Activated CD8-positive, alpha-beta T cell treated with anti-CD3 and anti-CD28 coated beads for 36 hours (primary cell): ENCODE measurements at regions of chr12 and their contacts with region 1.

Region 1: DNA sequence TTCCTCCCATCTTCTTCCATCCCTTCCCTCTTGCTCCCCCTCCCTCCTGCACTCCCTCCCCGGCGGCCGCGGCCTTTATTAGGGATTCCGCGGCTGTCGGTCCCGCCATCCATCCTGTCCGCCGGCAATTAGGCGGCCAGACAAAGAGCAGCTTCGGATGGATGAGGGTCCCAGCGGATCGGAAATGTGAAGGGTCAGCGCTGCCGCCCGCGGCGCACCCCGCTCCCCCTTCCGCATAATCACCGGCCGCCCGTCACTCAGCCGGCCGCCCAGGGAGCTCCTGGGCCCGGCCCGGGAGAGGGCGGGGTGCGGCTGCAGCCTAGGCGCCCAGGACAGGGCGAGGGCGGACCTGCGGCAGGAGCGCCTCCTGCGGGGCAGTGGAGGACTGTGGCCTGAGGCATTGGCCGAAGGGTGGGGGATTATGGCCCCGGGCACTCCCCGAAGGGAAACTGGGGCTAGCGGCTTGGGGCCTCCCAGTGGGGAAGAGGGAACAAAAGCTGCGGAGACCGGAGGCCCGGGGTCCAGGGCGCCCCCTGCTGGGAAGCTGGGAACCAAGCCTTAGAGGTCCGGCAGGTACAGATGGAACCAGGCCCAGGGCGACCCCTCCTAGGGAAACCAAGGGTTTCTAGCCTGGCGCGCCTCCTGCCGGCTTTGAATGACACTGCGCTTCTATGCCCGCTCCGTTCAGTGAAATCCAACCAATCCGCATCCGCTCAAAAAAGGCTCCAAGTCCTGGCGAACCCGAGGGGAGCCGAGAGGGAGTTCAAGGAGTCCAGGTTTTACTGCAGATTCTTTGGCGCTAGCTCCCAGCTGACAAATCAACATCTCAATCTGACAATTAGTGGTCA is 4.4 kb upstream of the DNAJC22 start:
- DNase-seq: peak; percentile 93
- ATAC-seq: peak; percentile 84
- H3K4me3 Mint-ChIP-seq: peak overlapping the region; percentile 53
- H3K27ac Mint-ChIP-seq: no peak overlapping the region
- H3K4me1 Mint-ChIP-seq: peaks cover 40% of the 10 kb centered on the region
- H3K27me3 Mint-ChIP-seq: peaks cover 69% of the 10 kb centered on the region
- CTCF ChIP-seq: peak; percentile 99

Region 2: DNA sequence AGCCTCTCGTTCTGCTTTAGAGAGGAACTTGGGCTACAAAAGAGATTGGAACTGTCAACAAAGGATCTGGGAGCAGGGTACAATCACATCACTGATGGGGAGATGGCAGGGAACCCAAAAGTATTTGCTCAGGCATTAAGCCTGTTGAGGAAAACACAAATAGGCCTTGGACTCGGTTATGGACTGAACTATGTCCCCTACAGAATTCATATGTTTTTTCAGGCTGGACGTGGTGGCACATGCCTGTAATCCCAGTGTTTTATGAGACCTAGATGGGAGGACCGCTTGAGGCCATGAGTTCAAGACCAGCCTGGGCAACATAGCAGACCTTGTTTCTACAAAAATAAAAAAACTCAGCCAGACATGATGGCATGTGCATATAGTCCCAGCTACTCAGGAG is 504.2 kb before region 1 on chr12:
- CTCF ChIA-PET with region 1: no interaction called
- POLR2A ChIA-PET with region 1: no interaction called
- intact Hi-C with region 1: no loop called
- DNase-seq: no peak
- ATAC-seq: no peak
- H3K4me3 Mint-ChIP-seq: no peak overlapping the region
- H3K27ac Mint-ChIP-seq: no peak overlapping the region
- H3K4me1 Mint-ChIP-seq: no peaks in the 10 kb centered on the region
- H3K27me3 Mint-ChIP-seq: no peaks in the 10 kb centered on the region
- CTCF ChIP-seq: no peak

Region 3: GRCh38 chr12:49304161-49304560 is 38.1 kb before region 1 on chr12:
- CTCF ChIA-PET with region 1: interaction called, 20 read pairs
- POLR2A ChIA-PET with region 1: interaction called, 3 read pairs
- intact Hi-C with region 1: no loop called
- DNase-seq: no peak
- ATAC-seq: no peak
- H3K4me3 Mint-ChIP-seq: no peak overlapping the region
- H3K27ac Mint-ChIP-seq: no peak overlapping the region
- H3K4me1 Mint-ChIP-seq: no peaks in the 10 kb centered on the region
- H3K27me3 Mint-ChIP-seq: peaks cover 34% of the 10 kb centered on the region
- CTCF ChIP-seq: no peak

Region 4: DNA sequence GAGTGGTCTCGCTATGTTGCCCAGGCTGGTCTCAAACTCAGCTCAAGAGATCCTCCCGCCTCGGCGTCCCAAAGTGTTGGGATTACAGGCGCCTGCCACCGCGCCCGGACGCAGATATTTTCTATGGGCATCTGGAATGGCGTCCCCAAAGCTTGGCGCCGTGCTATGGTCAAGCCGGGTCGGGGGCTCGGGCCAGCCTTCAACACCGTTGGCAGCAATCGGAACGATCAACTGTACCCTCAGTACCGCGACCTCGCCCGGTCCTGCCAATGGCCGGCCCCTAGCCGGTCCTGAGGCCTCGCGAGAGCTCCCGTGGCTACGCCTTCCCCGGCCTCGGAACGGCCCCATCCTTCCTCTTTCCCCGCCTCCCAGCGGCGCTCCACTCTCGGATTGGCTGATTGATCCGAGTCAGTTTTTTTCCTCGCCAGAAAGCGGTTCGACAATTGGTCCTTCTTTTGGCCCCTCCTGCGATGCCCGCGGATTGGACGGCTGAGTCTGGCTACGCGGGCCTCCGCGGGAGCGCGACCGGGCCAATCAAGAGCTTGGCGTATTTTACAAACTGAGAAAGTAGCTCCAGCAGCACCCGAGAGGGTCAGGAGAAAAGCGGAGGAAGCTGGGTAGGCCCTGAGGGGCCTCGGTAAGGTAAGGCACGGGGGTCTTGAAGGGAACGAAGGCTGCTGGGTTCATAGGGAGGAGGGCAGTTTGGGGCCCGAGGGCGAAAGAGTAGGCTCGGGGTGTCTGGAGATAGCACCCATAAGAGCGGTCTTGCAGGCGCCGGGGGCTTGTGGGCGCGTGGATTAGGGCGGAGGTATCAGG is 19.4 kb before region 1 on chr12 and contains the start of gene TROAP:
- CTCF ChIA-PET with region 1: interaction called, 42 read pairs
- POLR2A ChIA-PET with region 1: interaction called, 12 read pairs
- intact Hi-C with region 1: no loop called
- DNase-seq: peak; percentile 98
- ATAC-seq: peak; percentile 96
- H3K4me3 Mint-ChIP-seq: peak within 1 kb of the TSS; percentile 100
- H3K27ac Mint-ChIP-seq: peak within 1 kb of the TSS; percentile 92
- H3K4me1 Mint-ChIP-seq: peaks cover 10% of the 10 kb centered on the region
- H3K27me3 Mint-ChIP-seq: no peaks in the 10 kb centered on the region
- CTCF ChIP-seq: no peak
- total RNA-seq, gene TROAP: 46.6 to 52.6 TPM

Region 5: DNA sequence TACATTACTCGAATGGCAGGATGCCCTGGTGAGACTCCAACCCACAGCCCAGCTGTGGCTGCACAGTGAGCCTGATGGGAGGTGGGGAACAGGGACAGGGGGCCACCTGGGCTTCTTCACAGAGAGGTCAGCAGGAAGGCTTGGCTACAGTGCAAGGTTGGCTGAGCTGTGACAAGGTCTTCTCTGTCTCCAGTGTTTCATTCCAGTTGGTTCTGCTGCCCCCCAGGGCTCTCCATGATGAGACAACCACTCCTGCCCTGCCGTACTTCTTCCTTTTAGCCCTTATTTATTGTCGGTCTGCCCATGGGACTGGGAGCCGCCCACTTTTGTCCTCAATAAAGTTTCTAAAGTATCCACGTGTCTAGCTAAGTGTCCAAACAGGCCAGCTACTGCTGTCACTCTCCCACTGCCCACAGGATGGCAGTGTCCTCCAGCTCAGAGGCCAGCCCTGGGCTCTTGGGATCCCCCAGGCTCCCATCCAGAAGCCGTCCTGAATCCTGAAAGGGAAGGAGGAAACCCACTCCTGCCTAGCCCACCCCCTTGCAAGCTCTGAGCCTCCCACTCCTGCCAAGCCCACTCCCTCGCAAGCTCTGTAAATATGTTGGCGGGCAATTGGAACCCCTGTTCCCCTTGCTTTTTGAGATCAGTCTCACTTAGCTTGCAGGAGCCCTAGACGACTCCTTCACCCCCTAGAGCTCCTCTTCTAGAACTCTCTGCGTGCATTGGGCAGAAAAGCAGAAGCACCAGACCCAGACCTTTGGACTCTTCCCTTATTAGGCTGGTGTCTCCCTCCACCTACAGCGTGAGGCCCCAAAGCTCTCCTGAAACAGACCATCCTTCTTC is 10.7 kb before region 1 on chr12:
- CTCF ChIA-PET with region 1: interaction called, 52 read pairs
- POLR2A ChIA-PET with region 1: interaction called, 11 read pairs
- intact Hi-C with region 1: no loop called
- DNase-seq: peak; percentile 36
- ATAC-seq: peak; percentile 58
- H3K4me3 Mint-ChIP-seq: no peak overlapping the region
- H3K27ac Mint-ChIP-seq: no peak overlapping the region
- H3K4me1 Mint-ChIP-seq: peaks cover 3% of the 10 kb centered on the region
- H3K27me3 Mint-ChIP-seq: peaks cover 36% of the 10 kb centered on the region
- CTCF ChIP-seq: peak; percentile 56

Region 6: DNA sequence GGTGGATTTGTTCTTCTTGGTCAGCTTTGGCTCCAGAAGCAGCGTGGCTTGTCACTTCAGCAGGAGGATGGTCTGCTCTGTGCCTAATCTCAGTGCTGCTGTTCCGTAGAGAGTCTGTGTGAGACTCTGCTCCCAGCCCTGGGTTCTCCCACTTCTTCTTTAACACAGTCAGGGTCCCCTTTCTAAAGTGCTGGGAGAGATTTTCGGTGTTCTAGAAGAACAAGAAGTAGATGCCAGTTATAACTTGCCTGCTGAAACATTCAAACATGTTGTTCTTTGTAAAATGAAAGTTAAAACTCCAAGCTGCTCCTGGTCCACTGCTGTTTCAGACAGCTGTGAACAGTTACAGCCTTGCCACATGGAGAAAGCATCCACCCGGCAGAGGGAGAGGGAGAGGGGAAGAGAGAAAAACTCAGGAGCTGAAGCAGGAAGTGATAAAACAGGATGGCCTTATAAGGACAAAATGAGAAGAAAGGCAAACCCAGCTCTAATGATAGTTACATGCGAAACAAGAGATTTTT is 880.0 kb after region 1 on chr12:
- CTCF ChIA-PET with region 1: no interaction called
- POLR2A ChIA-PET with region 1: no interaction called
- intact Hi-C with region 1: no loop called
- DNase-seq: no peak
- ATAC-seq: no peak
- H3K4me3 Mint-ChIP-seq: no peak overlapping the region
- H3K27ac Mint-ChIP-seq: no peak overlapping the region
- H3K4me1 Mint-ChIP-seq: peaks cover 35% of the 10 kb centered on the region
- H3K27me3 Mint-ChIP-seq: no peaks in the 10 kb centered on the region
- CTCF ChIP-seq: no peak